Cardiac septum (tissue), 1 donor: ENCODE measurements at regions of chr17 and their contacts with region 1.

Region 1: DNA sequence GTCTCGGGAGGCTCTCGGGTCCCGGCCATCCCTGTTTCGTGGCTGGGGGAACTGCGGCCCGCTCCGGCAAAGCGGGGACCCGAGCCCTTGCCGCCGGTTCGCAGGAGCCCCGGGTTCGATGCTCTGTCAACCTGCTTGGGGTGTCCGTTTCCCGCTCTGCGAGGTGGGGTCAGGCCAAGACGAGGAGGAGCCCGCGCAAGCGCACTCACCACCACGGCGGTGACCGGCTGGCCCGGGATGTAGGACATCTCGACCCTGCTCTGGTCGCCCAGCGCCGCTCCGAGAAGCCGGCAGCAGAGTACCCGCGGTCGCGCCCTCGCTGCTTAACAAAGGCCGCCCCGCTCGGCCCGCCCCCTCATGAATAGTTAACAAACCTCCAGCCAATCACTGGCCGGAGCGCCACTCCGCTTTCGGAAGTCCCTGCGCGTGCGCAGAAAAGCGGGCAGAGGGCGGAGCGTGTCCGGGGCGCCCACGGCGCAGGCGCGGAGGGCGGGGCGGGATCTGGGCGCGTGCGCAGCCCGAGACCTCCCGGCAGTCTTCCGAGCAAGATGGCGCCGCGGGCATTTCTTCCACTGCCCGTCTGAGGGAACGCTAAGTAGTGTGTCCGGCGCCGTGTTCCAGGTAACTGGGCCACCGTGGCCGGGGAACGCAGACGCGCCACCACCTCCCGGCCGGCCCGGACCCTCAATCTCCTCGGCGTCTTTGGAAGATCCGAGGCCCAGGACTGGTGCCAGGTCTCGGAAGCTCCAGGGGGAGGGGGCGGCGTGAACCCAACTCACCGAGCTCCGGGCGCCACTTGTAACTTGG is at the starts of genes EMC6 and TAX1BP3:
- DNase-seq: peak; percentile 100
- total RNA-seq, gene EMC6: 54.0 TPM
- total RNA-seq, gene TAX1BP3: 158 TPM

Region 2: DNA sequence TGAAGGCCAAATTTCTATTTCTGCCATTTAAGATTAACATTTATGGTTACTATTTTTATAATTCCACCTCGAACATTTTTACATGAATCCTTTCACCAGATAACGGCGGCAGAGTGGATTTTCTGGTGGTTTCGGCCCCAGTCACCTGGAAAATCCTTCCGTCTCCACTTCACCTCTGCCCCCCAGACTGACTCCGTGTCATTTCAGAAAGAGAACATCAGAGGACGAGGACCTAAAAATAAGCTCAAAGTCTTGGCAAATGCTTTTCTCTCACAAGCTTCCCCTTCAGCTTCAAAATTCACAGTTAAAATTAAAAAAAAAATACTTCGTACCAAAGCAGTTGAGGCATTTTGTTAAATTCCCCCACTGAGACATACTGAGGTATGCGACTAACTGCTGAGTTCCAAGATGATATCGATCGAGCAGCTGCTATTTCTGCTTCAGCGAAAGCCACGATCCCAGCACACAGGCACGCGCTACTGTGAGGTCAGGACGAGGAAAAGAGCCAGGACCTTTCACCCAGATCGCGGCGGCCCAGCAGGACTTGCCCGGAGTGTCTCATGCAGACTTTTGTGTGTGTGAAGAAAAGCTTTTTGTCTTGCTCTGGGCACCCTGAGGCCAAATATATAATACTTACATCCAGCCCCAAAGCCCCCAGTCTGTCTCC is 155.8 kb before region 1 on chr17:
- intact Hi-C with region 1: no loop called
- DNase-seq: peak; percentile 87

Region 3: GRCh38 chr17:3535253-3535995 is 133.1 kb before region 1 on chr17:
- intact Hi-C with region 1: loop called (anchors 10 kb)
- DNase-seq: no peak

Region 4: DNA sequence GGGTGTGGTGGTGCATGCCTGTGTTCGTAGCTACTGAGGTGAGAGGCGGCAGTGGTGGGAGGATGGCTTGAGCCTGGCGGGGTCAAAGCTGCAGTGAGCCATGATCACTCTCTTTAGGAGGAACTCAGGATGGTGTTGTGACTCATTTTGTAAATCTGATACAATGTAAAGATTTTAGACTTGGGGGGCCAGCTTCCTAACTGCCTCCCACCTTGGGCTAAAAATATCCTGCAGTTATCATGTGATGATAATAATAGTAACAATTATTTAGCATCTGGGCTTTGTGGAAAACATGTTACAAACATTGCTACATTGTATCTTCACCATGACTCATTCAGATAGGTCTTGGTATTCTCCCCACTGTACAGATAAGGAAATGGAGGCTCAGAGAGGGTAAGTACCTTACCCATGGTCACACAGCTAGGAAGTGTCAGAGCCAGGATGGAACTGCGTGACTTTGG is 24.6 kb before region 1 on chr17:
- intact Hi-C with region 1: no loop called
- DNase-seq: no peak